ENCODE measurements at regions of chr1 and their contacts with region 1.

Region 1: DNA sequence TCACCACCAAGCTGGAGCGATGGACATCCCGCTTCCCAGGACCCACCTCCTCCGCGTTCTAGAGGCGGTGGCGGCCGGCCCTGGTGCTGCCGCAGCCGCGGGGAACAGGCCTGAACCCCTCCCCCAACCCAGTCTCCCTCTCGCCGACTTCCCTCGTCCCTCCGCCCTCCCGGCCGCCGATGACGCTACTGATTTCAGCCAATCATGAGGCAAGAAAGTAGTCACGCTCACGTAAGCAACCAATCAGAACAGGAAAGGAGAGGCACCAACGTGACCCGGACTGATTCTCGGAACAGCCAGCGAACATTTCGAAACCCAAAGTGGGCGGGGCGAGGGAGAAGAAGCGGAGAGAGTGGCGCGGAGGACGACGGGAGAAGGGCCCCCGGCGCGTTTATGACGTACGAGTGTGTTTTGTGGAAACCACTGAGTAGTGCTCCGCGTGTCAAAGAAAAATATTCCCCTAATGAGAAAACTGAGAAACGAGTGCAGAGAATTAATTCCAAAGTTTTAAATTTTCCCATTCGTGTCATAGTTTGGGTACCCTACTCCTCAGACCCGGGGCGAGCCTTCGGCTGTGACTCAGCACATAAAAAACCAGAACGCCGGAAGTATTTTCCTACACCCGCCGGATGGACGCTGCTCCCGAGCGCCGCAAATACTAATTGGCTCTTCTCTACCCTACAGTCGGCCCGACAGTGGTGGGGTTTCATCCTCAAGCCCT is at the start of gene NRDC:
- DNase-seq: peak; percentile 100
- H3K4me3 Mint-ChIP-seq: no peak within 1 kb of the TSS
- H3K27ac Mint-ChIP-seq: no peak within 1 kb of the TSS
- H3K4me1 Mint-ChIP-seq: peaks cover 26% of the 10 kb centered on the region
- H3K27me3 Mint-ChIP-seq: peaks cover 2% of the 10 kb centered on the region
- total RNA-seq, gene NRDC: 136 to 145 TPM

Region 2: DNA sequence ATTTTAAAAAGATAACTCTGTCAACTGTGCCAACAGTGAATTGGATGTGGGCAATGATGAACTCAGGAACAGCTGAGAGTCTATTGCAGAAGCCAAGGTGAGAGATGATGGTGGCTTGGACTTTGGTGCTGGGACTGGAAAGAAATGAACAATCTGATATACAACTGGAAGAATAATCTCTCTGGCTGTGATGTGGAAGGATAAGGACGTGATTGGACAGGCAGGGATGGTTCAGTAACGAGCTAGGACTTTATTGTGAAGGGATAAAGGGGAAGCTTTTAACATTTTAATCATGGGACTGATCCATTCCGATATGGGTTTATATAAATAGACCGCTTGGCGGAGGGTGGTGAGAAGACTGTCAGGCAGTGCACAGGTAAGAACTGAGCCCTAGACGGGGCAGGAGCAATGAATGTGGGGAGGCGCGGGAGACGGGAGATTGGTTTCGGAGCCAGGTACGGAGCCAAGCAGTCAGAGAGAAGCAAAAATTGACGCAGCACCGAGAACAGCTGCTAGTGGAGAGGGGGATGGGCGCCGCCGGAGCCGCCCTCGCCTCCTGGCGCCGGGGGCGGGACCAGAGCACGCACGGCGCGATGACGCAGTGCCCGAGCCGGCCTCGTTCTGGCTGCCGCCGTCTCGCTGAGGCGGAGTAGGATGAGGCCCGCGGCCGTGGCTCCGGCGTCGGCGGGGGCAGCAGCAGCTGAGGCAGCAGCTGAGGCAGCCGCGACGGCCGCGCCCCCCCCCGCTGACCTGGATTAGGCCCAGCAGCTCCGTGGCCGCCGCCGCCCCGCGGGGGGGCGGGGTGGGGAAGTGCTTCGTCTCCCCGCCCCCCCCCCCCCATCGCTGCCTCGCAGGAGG is 642.9 kb before region 1 on chr1 and contains the start of gene RNF11:
- CTCF ChIA-PET with region 1: no interaction called
- intact Hi-C with region 1: loop called (anchors 1 kb)
- DNase-seq: peak; percentile 93
- H3K4me3 Mint-ChIP-seq: peak within 1 kb of the TSS; percentile 96
- H3K27ac Mint-ChIP-seq: peak within 1 kb of the TSS; percentile 89
- H3K4me1 Mint-ChIP-seq: peaks cover 35% of the 10 kb centered on the region
- H3K27me3 Mint-ChIP-seq: no peaks in the 10 kb centered on the region
- total RNA-seq, gene RNF11: 14.9 to 17.7 TPM

Region 3: GRCh38 chr1:51519048-51519864 is 359.5 kb before region 1 on chr1 and contains the start of gene EPS15:
- CTCF ChIA-PET with region 1: no interaction called
- intact Hi-C with region 1: loop called (anchors 2 kb)
- DNase-seq: peak; percentile 89
- H3K4me3 Mint-ChIP-seq: peak within 1 kb of the TSS; percentile 87
- H3K27ac Mint-ChIP-seq: peak within 1 kb of the TSS; percentile 84
- H3K4me1 Mint-ChIP-seq: peaks cover 47% of the 10 kb centered on the region
- H3K27me3 Mint-ChIP-seq: no peaks in the 10 kb centered on the region
- total RNA-seq, gene EPS15: 56.0 to 57.0 TPM

Region 4: GRCh38 chr1:51729156-51729823 is 149.5 kb before region 1 on chr1:
- CTCF ChIA-PET with region 1: no interaction called
- intact Hi-C with region 1: loop called (anchors 2 kb)
- DNase-seq: peak; percentile 97
- H3K4me3 Mint-ChIP-seq: peak overlapping the region; percentile 87
- H3K27ac Mint-ChIP-seq: peak overlapping the region; percentile 87
- H3K4me1 Mint-ChIP-seq: peaks cover 33% of the 10 kb centered on the region
- H3K27me3 Mint-ChIP-seq: no peaks in the 10 kb centered on the region

Region 5: GRCh38 chr1:51843948-51844347 is 34.8 kb before region 1 on chr1:
- CTCF ChIA-PET with region 1: no interaction called
- intact Hi-C with region 1: loop called (anchors 5 kb)
- DNase-seq: peak; percentile 55
- H3K4me3 Mint-ChIP-seq: no peak overlapping the region
- H3K27ac Mint-ChIP-seq: no peak overlapping the region
- H3K4me1 Mint-ChIP-seq: peaks cover 25% of the 10 kb centered on the region
- H3K27me3 Mint-ChIP-seq: no peaks in the 10 kb centered on the region

Region 6: DNA sequence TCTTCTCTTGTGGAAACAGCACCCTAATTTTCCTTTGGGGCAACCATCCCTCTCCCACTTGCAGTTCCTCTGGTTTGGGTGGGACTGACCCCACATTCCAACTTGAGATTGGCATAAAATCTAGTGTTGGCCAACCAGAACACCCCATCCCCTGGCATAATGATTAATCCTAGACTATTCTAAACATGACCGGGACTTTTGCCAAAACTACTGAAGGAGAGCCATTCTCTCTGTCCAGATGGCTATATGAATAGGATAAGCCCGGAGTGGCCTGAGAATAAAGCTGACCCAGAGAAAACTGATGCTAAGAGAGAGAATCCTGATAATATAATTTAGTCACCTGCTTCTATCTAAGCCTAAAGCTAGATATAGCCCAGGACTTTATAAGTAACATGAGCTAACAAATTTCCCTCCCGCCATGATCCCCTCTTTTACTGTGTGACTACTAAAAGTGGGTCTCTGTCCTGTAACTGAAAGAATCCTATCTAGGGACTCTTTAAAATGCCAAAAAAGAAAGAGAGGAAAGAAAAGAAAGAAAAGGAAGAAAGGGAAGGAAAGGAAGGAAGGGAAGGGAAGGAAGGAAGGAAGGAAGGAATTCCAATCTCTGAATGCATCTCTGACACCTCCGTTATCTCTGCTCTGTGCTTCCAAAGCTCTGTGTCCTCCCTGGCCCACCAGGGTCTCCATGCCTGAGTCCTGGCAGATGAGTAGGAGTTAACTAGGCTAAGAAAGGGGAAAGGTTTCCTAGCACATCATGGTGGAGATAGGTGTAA is 27.7 kb after region 1 on chr1:
- CTCF ChIA-PET with region 1: no interaction called
- intact Hi-C with region 1: no loop called
- DNase-seq: no peak
- H3K4me3 Mint-ChIP-seq: no peak overlapping the region
- H3K27ac Mint-ChIP-seq: no peak overlapping the region
- H3K4me1 Mint-ChIP-seq: peaks cover 5% of the 10 kb centered on the region
- H3K27me3 Mint-ChIP-seq: no peaks in the 10 kb centered on the region

Region 7: GRCh38 chr1:51916587-51917405 is 38.0 kb after region 1 on chr1:
- CTCF ChIA-PET with region 1: no interaction called
- intact Hi-C with region 1: no loop called
- DNase-seq: no peak
- H3K4me3 Mint-ChIP-seq: no peak overlapping the region
- H3K27ac Mint-ChIP-seq: no peak overlapping the region
- H3K4me1 Mint-ChIP-seq: no peaks in the 10 kb centered on the region
- H3K27me3 Mint-ChIP-seq: no peaks in the 10 kb centered on the region

Region 8: GRCh38 chr1:52404116-52404986 is 525.6 kb after region 1 on chr1 and contains the starts of genes ORC1 and PRPF38A:
- CTCF ChIA-PET with region 1: no interaction called
- intact Hi-C with region 1: loop called (anchors 2 kb)
- DNase-seq: peak; percentile 99
- H3K4me3 Mint-ChIP-seq: peak within 1 kb of the TSS; percentile 100
- H3K27ac Mint-ChIP-seq: peak within 1 kb of the TSS; percentile 99
- H3K4me1 Mint-ChIP-seq: peaks cover 45% of the 10 kb centered on the region
- H3K27me3 Mint-ChIP-seq: no peaks in the 10 kb centered on the region
- total RNA-seq, gene ORC1: 46.9 to 49.3 TPM
- total RNA-seq, gene PRPF38A: 86.0 to 91.8 TPM

Measured in activated naive CD4-positive, alpha-beta T cell treated with anti-CD3 and anti-CD28 coated beads for 36 hours (primary cell).